Calu3 (cell line): ENCODE measurements at regions of chr2 and their contacts with region 1.

Region 1: DNA sequence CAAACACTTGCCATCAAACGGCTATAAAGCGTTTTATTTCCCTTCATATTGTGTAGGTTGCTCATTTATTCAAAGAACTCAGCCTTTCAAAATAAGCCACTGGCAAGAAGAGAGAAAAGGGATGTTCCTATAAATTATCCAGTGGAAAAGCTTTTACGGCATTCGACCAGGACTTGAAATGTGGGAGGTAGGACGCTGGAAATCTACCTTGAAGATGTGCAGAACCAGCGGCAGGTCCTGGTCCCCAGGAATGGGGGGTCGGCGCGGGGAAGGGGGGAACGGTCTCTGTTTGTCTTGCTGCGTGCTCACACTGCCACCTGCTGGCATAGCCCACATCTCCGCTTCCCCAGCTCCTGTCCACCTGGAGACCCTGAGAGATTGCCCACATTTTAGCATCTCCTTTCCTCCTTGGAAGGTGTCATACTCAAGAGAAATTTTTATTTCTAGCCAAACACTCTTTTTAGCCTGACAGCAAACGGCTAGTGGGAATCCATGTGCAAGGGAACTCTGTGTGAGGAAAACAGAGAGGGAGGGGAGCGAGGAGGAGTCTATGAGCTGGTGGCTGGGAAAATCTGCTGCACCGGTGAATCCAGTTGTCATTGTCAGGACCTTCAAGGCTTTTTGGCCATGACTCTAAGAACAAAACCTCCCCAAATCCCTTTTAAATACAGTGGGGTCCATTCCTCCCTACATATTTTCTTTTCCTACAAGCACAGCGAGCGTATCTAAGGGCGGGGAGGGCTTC is 349.0 kb upstream of the PKDCC start:
- DNase-seq: peak; percentile 39
- H3K4me3 Mint-ChIP-seq: no peak overlapping the region
- H3K27ac Mint-ChIP-seq: no peak overlapping the region
- H3K4me1 Mint-ChIP-seq: no peaks in the 10 kb centered on the region
- H3K27me3 Mint-ChIP-seq: peaks cover 21% of the 10 kb centered on the region
- CTCF ChIP-seq: peak; percentile 69

Region 2: DNA sequence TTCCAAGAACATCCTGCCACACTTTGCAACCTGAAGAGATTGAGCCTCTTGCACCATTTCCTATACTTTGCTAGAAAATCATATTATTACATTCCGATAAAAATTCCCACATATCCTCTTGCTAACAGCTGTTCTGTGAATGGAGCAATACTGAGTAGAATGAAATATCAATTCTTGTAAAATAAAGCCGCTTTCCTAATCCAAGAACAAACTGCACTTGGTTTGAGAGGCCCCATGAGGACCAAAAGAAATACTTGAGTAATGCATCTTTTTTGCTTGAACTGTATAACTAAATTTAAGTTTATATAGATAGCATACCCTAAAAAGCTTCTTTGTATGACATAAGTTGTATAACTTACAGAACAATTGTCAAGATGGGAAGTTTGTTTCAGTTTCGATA is 614.5 kb before region 1 on chr2:
- CTCF ChIA-PET with region 1: no interaction called
- intact Hi-C with region 1: no loop called
- DNase-seq: no peak
- H3K4me3 Mint-ChIP-seq: no peak overlapping the region
- H3K27ac Mint-ChIP-seq: no peak overlapping the region
- H3K4me1 Mint-ChIP-seq: no peaks in the 10 kb centered on the region
- H3K27me3 Mint-ChIP-seq: no peaks in the 10 kb centered on the region
- CTCF ChIP-seq: no peak

Region 3: DNA sequence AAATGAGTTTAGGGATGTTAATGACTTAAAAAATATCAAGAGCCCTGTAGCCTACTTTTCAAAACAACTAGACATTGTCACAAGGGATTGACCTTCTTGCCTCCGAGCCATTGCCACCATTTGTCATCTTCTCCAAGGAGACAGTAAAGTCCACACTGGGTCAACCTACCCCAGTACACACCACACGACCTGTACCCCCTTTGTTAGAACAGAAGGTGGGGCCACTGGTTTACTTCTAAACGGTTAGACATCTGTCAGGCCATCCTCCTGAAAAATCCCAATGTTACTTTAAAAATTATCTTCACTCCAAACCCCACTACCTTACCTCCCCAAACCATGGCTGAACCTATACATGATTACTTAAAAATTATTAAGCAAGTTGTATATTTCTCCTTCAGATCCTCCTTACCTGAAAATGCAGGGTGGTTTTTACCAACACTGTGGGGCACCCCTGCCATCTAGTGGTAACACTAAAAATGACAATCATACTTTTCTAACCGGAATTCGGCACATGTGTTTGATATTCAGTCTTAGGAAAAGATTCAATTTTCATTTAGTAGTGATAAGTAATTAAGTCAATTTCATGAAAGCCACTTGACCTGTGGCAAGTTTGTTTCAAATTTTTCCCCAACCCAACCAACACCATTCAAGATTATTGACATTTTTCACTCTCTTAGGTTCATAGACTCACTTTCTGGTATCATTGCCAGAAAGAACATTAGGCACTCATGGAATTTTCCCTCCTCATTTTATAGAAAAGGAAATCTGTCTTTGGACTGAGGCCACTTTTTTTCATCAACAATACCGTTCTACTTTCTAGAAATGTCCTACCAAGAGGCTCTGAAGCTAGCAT is 83.7 kb after region 1 on chr2:
- CTCF ChIA-PET with region 1: no interaction called
- intact Hi-C with region 1: loop called (anchors 5 kb)
- DNase-seq: peak; percentile 46
- H3K4me3 Mint-ChIP-seq: no peak overlapping the region
- H3K27ac Mint-ChIP-seq: no peak overlapping the region
- H3K4me1 Mint-ChIP-seq: peaks cover 8% of the 10 kb centered on the region
- H3K27me3 Mint-ChIP-seq: peaks cover 30% of the 10 kb centered on the region
- CTCF ChIP-seq: peak; percentile 46